ENCODE measurements at regions of chr3 and their contacts with region 1.

Region 1: GRCh38 chr3:185831195-185831594 is 6.4 kb upstream of the IGF2BP2 start:
- DNase-seq: peak; percentile 54
- ATAC-seq: peak; percentile 66
- H3K4me3 ChIP-seq: no peak overlapping the region
- H3K27ac ChIP-seq: peak overlapping the region; percentile 44
- H3K4me1 ChIP-seq: peaks cover 32% of the 10 kb centered on the region
- H3K27me3 ChIP-seq: no peaks in the 10 kb centered on the region
- CTCF ChIP-seq: no peak

Region 2: GRCh38 chr3:185865247-185865646 is 34.1 kb after region 1 on chr3:
- CTCF ChIA-PET with region 1: no interaction called
- POLR2A ChIA-PET with region 1: no interaction called
- intact Hi-C with region 1: no loop called
- DNase-seq: no peak
- ATAC-seq: no peak
- H3K4me3 ChIP-seq: no peak overlapping the region
- H3K27ac ChIP-seq: no peak overlapping the region
- H3K4me1 ChIP-seq: no peaks in the 10 kb centered on the region
- H3K27me3 ChIP-seq: no peaks in the 10 kb centered on the region
- CTCF ChIP-seq: no peak

Region 3: GRCh38 chr3:185900226-185900625 is 69.0 kb after region 1 on chr3:
- CTCF ChIA-PET with region 1: no interaction called
- POLR2A ChIA-PET with region 1: no interaction called
- intact Hi-C with region 1: loop called (anchors 5 kb)
- DNase-seq: peak; percentile 99
- ATAC-seq: peak; percentile 100
- H3K4me3 ChIP-seq: no peak overlapping the region
- H3K27ac ChIP-seq: peak overlapping the region; percentile 42
- H3K4me1 ChIP-seq: peaks cover 6% of the 10 kb centered on the region
- H3K27me3 ChIP-seq: no peaks in the 10 kb centered on the region
- CTCF ChIP-seq: no peak

Measured in PC-3 (cell line).